Activated CD4-positive, alpha-beta T cell treated with anti-CD3 and anti-CD28 coated beads for 36 hours (primary cell): ENCODE measurements at regions of chr6 and their contacts with region 1.

Region 1: DNA sequence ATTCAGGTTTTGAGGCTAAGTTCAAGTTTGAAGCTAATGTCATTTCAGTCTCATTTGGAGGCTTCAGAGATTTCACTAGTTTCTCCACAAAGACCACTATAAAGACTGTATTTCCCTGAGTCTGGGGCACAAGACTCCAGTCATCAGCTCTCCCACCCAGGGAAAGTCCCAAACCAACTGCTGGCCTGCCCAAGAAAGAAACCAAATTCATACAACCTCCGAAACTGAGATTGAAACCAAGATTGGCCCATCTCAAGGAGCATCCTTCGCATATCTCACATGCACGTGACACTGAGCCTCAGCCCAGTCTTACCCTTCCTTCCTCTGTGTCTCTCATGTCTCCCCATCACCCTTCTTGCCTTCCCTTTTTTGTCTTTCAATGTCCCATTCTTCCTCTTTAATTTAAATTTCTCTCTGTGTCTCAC is 3.5 kb upstream of the LTA start:
- DNase-seq: peak; percentile 83
- ATAC-seq: peak; percentile 60
- H3K4me3 Mint-ChIP-seq: peak overlapping the region; percentile 58
- H3K27ac Mint-ChIP-seq: peak overlapping the region; percentile 89
- H3K4me1 Mint-ChIP-seq: peaks cover 86% of the 10 kb centered on the region
- H3K27me3 Mint-ChIP-seq: peaks cover 3% of the 10 kb centered on the region

Region 2: DNA sequence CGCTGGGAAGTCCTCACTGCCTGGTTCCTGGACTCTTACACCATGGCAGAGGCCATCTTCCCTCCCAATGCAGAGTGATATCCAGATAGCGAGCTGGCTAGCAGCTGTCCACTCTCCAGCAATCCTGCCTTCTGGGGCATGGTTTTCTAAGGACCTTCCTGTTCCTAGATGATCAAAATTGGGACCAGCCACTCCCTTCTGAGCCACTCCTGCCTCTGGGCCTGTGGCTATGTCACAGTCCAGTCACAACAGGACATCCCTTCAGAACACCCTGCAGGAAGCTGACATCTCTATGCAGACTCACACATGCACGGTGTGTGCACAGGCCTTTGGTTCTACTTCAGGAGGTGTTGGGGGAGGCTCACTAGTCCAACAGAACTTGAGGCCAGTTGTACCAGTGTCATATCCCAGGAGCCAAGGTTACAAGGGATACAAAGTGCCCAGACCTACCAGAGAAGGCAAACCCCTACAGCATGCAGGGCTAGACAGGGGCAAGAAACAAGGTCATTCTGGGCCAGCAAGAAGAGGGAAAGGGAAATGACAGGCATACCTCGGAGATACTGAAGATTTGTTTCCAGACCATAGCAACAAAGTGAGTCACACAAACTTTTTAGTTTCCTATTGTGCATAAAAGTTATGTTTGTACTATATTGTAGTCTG is 42.5 kb before region 1 on chr6:
- CTCF ChIA-PET with region 1: no interaction called
- POLR2A ChIA-PET with region 1: interaction called, 14 read pairs
- intact Hi-C with region 1: no loop called
- DNase-seq: no peak
- ATAC-seq: no peak
- H3K4me3 Mint-ChIP-seq: no peak overlapping the region
- H3K27ac Mint-ChIP-seq: no peak overlapping the region
- H3K4me1 Mint-ChIP-seq: no peaks in the 10 kb centered on the region
- H3K27me3 Mint-ChIP-seq: no peaks in the 10 kb centered on the region